ENCODE measurements at regions of chr11 and their contacts with region 1.

Region 1: GRCh38 chr11:110092515-110093404 is at the start of gene ZC3H12C:
- DNase-seq: peak; percentile 47
- H3K4me3 Mint-ChIP-seq: peak within 1 kb of the TSS; percentile 87
- H3K27ac Mint-ChIP-seq: peak within 1 kb of the TSS; percentile 93
- H3K4me1 Mint-ChIP-seq: peaks cover 16% of the 10 kb centered on the region
- H3K27me3 Mint-ChIP-seq: peaks cover 56% of the 10 kb centered on the region
- total RNA-seq, gene ZC3H12C: 5.7 and 6.2 TPM in 2 replicates

Region 2: DNA sequence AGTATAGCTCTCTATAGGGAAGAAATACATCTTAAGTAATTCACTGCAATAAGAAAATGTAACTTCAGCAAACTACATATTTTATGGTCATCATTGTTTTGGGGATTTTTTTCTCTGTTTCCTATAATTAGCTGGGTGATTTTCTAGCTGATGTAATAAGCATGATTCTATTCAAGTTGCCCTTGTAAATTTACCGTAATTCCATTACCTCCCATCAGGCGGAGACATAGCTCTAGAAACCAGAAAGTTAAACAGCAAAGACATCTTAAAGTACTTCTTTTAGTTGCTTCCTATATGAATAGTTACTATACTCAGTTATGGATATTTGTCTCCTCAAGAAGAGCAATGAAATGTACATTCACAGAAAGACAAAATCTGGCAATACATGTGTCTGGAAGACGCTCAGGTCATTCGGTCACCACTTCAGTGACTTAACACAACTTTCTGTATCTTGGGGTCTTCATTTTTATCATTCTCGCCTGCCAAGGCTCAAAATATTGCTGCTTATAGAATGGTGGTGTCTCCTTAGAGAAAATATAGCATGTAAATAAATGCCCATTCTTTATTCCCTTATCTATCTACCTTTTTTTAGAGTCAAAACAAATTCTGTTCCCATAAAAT is 239.5 kb before region 1 on chr11:
- intact Hi-C with region 1: loop called (anchors 10 kb)
- DNase-seq: no peak
- H3K4me3 Mint-ChIP-seq: no peak overlapping the region
- H3K27ac Mint-ChIP-seq: no peak overlapping the region
- H3K4me1 Mint-ChIP-seq: no peaks in the 10 kb centered on the region
- H3K27me3 Mint-ChIP-seq: peaks cover 2% of the 10 kb centered on the region

Region 3: DNA sequence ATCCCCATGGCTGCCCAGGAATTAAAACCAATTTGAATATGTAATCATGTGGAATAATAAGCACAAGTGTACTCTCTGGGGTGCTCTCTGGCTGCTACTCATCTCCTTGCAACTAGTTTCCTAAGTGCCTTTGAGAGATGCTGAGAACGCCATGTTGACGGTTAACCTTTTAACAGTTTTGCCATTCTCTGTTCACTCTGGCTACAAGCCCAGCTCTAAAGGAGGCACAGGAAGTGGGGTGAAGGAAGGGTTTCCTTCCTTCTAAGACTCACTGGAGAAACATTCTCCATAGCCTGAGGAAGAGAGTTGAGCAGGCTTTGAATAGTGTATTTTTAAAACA is 121.6 kb before region 1 on chr11:
- intact Hi-C with region 1: loop called (anchors 1 kb)
- DNase-seq: no peak
- H3K4me3 Mint-ChIP-seq: peak overlapping the region; percentile 57
- H3K27ac Mint-ChIP-seq: peak overlapping the region; percentile 82
- H3K4me1 Mint-ChIP-seq: peaks cover 45% of the 10 kb centered on the region
- H3K27me3 Mint-ChIP-seq: peaks cover 7% of the 10 kb centered on the region

Region 4: GRCh38 chr11:110190885-110191284 is 98.1 kb after region 1 on chr11:
- intact Hi-C with region 1: loop called (anchors 5 kb)
- DNase-seq: no peak
- H3K4me3 Mint-ChIP-seq: no peak overlapping the region
- H3K27ac Mint-ChIP-seq: no peak overlapping the region
- H3K4me1 Mint-ChIP-seq: peaks cover 15% of the 10 kb centered on the region
- H3K27me3 Mint-ChIP-seq: peaks cover 38% of the 10 kb centered on the region